ENCODE measurements at regions of chr7 and their contacts with region 1.

Region 1: DNA sequence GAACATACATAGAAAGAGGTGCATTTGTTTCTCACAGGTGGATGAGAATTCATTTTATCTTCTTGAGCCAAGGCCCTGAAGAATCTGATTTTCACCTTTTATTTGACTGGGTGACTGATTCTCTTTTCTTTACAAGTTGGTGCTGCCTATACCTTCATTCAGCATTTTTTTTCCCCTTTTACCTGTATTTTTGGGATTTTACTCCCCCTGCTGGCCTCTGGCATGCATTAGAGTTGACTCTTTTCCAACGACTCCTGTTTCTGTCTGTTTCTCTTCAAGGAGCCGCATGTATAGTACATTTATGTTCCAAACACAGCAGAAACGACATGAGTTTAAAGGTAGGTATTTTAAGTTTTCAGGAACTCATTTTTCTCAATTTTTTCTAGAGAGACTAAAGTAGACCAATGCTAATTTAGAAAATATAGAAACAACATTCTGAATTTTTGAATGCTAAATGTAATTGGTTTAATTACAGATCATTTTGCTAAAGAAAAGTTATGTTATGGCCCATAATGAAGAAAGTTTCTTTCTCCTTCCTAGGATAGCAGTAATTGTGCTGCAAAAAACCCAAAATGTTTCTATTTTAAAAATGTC is 149.8 kb upstream of the HDAC9 start:
- DNase-seq: no peak
- ATAC-seq: peak; percentile 60
- H3K4me3 Mint-ChIP-seq: no peak overlapping the region
- H3K27ac Mint-ChIP-seq: no peak overlapping the region
- H3K4me1 Mint-ChIP-seq: peaks cover 47% of the 10 kb centered on the region
- H3K27me3 Mint-ChIP-seq: no peaks in the 10 kb centered on the region
- CTCF ChIP-seq: peak; percentile 62

Region 2: GRCh38 chr7:16982640-16983350 is 1362.9 kb before region 1 on chr7:
- CTCF ChIA-PET with region 1: no interaction called
- POLR2A ChIA-PET with region 1: no interaction called
- intact Hi-C with region 1: loop called (anchors 5 kb)
- DNase-seq: no peak
- ATAC-seq: peak; percentile 64
- H3K4me3 Mint-ChIP-seq: peak overlapping the region; percentile 30
- H3K27ac Mint-ChIP-seq: peak overlapping the region; percentile 15
- H3K4me1 Mint-ChIP-seq: peaks cover 7% of the 10 kb centered on the region
- H3K27me3 Mint-ChIP-seq: peaks cover 2% of the 10 kb centered on the region
- CTCF ChIP-seq: peak; percentile 57

Region 3: GRCh38 chr7:17706734-17707133 is 639.0 kb before region 1 on chr7:
- CTCF ChIA-PET with region 1: interaction called, 6 read pairs
- POLR2A ChIA-PET with region 1: no interaction called
- intact Hi-C with region 1: loop called (anchors 1 kb)
- DNase-seq: no peak
- ATAC-seq: no peak
- H3K4me3 Mint-ChIP-seq: no peak overlapping the region
- H3K27ac Mint-ChIP-seq: no peak overlapping the region
- H3K4me1 Mint-ChIP-seq: no peaks in the 10 kb centered on the region
- H3K27me3 Mint-ChIP-seq: peaks cover 6% of the 10 kb centered on the region
- CTCF ChIP-seq: no peak

Region 4: DNA sequence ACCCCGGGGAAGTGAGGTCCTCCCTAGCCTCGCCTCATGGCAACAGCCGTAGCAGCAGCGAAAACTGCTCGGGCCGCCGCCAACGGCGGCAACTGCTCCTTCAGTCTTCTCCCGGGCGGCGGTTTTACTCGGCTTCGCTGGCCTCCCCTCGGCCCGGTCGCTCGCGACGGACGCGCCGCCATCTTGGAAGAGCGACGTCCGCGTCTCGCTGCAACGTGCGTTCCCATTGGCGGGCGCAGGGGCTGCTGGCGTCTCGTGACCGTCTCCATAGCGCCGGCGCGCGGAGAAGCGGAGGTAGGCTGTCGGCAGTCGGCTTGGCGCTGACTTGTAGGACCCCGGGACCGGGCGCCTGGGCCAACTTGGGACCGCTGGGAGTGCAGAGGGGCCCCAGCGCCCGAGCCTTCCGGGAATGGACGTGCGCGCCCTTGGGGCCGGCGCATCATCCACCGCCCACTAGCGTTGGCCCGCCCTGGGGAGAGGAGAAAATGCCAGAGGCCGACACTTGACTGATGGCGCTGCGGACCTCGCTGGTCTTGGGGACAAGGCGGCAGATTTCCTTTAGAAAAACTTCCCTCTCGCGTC is 405.3 kb before region 1 on chr7 and contains the start of gene SNX13:
- CTCF ChIA-PET with region 1: interaction called, 3 read pairs
- POLR2A ChIA-PET with region 1: no interaction called
- intact Hi-C with region 1: loop called (anchors 2 kb)
- DNase-seq: peak; percentile 84
- ATAC-seq: peak; percentile 91
- H3K4me3 Mint-ChIP-seq: peak within 1 kb of the TSS; percentile 98
- H3K27ac Mint-ChIP-seq: peak within 1 kb of the TSS; percentile 98
- H3K4me1 Mint-ChIP-seq: peaks cover 44% of the 10 kb centered on the region
- H3K27me3 Mint-ChIP-seq: no peaks in the 10 kb centered on the region
- CTCF ChIP-seq: no peak
- total RNA-seq, gene SNX13: 40.0 and 46.5 TPM in 2 replicates

Region 5: DNA sequence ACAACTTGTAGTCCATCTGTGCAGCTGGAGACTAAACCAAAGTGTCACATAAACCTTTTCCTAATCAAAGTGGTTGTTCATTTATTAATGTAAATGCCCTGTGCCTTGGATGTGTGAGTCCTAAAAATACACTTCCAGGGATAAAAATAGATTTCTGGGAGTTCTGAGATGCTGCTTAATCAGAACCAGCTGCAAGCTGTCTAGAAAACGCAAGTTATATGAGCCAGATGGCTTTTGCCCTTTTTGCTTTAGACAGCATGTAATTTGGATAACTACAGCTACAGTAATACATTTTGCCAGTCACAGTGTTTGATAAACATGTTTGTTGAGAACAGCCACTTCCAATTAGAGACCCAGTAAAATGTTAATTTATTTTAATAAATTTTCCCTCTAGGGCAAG is 133.0 kb before region 1 on chr7:
- CTCF ChIA-PET with region 1: interaction called, 147 read pairs
- POLR2A ChIA-PET with region 1: interaction called, 3 read pairs
- intact Hi-C with region 1: loop called (anchors 1 kb)
- DNase-seq: no peak
- ATAC-seq: no peak
- H3K4me3 Mint-ChIP-seq: no peak overlapping the region
- H3K27ac Mint-ChIP-seq: no peak overlapping the region
- H3K4me1 Mint-ChIP-seq: peaks cover 8% of the 10 kb centered on the region
- H3K27me3 Mint-ChIP-seq: no peaks in the 10 kb centered on the region
- CTCF ChIP-seq: no peak

Region 6: DNA sequence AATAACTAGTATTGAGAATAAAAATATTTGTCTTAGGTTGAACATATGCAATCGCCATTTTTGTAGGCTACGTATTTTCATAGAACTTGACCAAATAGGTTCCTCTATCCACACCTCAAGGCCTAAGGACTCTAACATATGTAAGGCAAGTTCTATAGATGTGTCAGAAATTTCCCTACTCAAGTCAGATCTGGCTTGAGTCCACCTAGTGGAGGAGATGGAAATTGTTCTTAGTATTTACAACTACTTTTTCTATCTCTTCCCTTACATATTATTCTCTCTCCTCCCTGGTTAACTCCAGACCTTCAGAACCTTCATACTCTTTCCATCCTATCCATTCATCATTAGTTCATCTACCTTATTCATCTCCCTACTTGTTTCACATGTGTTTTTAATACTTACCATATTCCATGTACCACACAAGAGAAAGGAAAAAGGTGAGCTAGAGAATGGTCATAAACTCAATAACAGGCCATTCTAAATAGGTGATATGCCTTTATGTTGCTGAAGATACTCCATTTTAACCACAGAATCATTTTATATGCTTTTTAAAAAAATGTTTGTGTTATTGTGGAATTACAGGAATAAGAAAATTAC is 24.7 kb before region 1 on chr7:
- CTCF ChIA-PET with region 1: interaction called, 12 read pairs
- POLR2A ChIA-PET with region 1: interaction called, 5 read pairs
- intact Hi-C with region 1: no loop called
- DNase-seq: no peak
- ATAC-seq: peak; percentile 92
- H3K4me3 Mint-ChIP-seq: no peak overlapping the region
- H3K27ac Mint-ChIP-seq: peak overlapping the region; percentile 47
- H3K4me1 Mint-ChIP-seq: peaks cover 42% of the 10 kb centered on the region
- H3K27me3 Mint-ChIP-seq: no peaks in the 10 kb centered on the region
- CTCF ChIP-seq: peak; percentile 39

Region 7: GRCh38 chr7:18753972-18754610 is 408.4 kb after region 1 on chr7:
- CTCF ChIA-PET with region 1: no interaction called
- POLR2A ChIA-PET with region 1: no interaction called
- intact Hi-C with region 1: no loop called
- DNase-seq: no peak
- ATAC-seq: no peak
- H3K4me3 Mint-ChIP-seq: no peak overlapping the region
- H3K27ac Mint-ChIP-seq: no peak overlapping the region
- H3K4me1 Mint-ChIP-seq: no peaks in the 10 kb centered on the region
- H3K27me3 Mint-ChIP-seq: no peaks in the 10 kb centered on the region
- CTCF ChIP-seq: no peak